T-cell (primary cell): ENCODE measurements at regions of chr6 and their contacts with region 1.

Region 1: DNA sequence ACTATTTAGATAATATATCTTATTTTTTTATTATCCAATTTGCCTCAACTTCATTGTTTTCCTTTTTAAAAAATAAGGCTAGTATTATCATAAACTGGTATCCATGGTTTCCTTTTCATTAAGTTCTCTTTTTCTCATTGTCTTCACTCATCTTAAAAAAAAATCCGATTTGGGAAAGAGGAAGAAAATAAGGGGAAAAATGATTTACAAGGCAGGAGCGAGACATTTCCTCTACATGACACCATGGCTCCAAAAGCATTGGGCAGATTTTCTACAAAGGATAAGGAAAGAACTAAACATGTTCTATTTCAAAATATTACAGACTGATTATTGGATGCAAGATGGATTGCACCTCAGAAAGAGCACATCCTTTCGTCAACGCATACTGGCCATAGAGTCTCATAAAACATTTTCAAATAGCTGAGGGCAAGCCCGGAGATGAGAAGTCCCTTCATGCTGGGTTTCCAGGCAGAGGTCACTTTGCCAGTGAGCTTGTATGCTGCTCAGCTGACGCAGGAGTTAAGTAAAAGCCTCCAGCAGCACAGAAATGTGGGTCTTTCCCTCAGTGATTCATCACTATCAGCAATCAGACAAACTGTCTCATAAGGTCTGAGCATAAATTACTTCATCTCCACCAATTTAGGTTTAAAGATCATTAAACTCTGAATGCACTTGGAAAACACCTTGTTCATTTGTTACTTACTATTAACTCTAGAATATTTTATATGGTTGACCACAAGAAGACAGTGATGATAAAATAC is 129.0 kb upstream of the TNFAIP3 start:
- DNase-seq: peak in 1 of 35 experiments; percentile 19
- ATAC-seq: no peak
- H3K4me3 ChIP-seq: no peak overlapping the region
- H3K4me3 Mint-ChIP-seq: no peak overlapping the region
- H3K27ac ChIP-seq: no peak overlapping the region
- H3K27ac Mint-ChIP-seq: peak overlapping the region in 1 of 2 donors; percentile 40
- H3K4me1 ChIP-seq: peaks cover 7 to 9% of the 10 kb centered on the region in 2 experiments
- H3K4me1 Mint-ChIP-seq: peaks cover 10 to 30% (median 23%) of the 10 kb centered on the region in 3 donors
- H3K27me3 ChIP-seq: peaks cover 0 to 3% of the 10 kb centered on the region in 2 experiments
- H3K27me3 Mint-ChIP-seq: no peaks in the 10 kb centered on the region

Region 2: DNA sequence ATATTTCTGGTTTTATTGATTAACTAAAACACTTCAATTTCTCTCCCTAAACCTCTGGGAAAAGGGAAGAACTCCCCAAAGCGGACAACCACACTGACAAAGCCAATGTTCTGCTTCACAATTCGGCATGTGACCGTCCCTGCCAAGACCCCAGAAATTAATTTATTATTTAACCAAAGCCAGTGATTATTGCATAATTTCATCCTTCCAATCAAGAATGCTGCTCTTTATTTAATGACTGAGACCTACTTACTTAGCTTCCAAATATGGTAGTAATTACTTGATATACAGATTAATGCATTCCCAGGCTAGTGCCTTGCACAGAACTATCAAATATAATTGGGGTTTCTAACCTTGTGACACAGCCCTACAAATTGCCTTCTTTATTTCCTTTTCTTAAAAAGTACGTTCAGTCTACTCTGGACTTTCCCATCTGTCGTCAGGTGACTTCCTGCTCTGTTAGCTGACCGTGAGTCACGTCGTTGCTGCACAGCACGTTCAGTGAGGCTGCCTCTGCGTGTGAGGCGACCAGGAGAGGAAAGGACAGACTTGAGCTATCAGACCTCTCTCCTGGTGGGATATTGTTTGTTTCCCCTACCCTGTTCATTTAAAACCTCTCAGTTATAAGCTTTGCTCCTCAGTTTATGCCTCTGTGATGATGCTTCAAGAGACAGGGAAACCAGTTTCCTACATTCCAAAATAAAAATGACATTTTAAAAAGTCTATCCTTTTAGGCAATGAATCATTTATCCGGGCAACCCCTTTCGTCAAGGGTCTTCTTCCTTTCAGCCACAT is 73.3 kb after region 1 on chr6:
- CTCF ChIA-PET with region 1: no interaction called
- POLR2A ChIA-PET with region 1: interaction called in 1 of 2 experiments, 13 read pairs
- DNase-seq: peak; percentile 23 to 94 (median 71)
- ATAC-seq: peak; percentile 88 to 99 (median 98)
- H3K4me3 ChIP-seq: peak overlapping the region in 1 of 2 donors; percentile 23
- H3K4me3 Mint-ChIP-seq: peak overlapping the region; percentile 21 to 62 (median 38)
- H3K27ac ChIP-seq: peak overlapping the region; percentile 92
- H3K27ac Mint-ChIP-seq: peak overlapping the region; percentile 81 to 95
- H3K4me1 ChIP-seq: peaks cover 9 to 20% of the 10 kb centered on the region in 2 experiments
- H3K4me1 Mint-ChIP-seq: peaks cover 47 to 69% (median 48%) of the 10 kb centered on the region in 3 donors
- H3K27me3 ChIP-seq: no peaks in the 10 kb centered on the region
- H3K27me3 Mint-ChIP-seq: no peaks in the 10 kb centered on the region